B cell (primary cell): ENCODE measurements at regions of chr17 and their contacts with region 1.

Region 1: GRCh38 chr17:21214015-21214776 is at the start of gene TMEM11:
- DNase-seq: peak; percentile 96
- ATAC-seq: peak; percentile 91
- H3K4me3 ChIP-seq: peak within 1 kb of the TSS; percentile 68 to 99 (median 89)
- H3K4me3 Mint-ChIP-seq: peak within 1 kb of the TSS; percentile 93
- H3K27ac ChIP-seq: peak within 1 kb of the TSS; percentile 85 to 91
- H3K27ac Mint-ChIP-seq: peak within 1 kb of the TSS; percentile 92
- H3K4me1 ChIP-seq: peaks cover 31 to 37% of the 10 kb centered on the region in 2 donors
- H3K4me1 Mint-ChIP-seq: peaks cover 49% of the 10 kb centered on the region
- H3K27me3 ChIP-seq: no peaks in the 10 kb centered on the region
- H3K27me3 Mint-ChIP-seq: no peaks in the 10 kb centered on the region
- CTCF ChIP-seq: no peak
- total RNA-seq, gene TMEM11: 24.7 and 25.3 TPM in 2 replicates

Region 2: GRCh38 chr17:20155258-20156195 is 1058.7 kb before region 1 on chr17:
- CTCF ChIA-PET with region 1: no interaction called
- POLR2A ChIA-PET with region 1: no interaction called
- intact Hi-C with region 1: loop called (anchors 2 kb)
- DNase-seq: peak; percentile 99
- ATAC-seq: peak; percentile 96
- H3K4me3 ChIP-seq: peak overlapping the region; percentile 8 to 77 (median 72)
- H3K4me3 Mint-ChIP-seq: no peak overlapping the region
- H3K27ac ChIP-seq: peak overlapping the region; percentile 56 to 85
- H3K27ac Mint-ChIP-seq: no peak overlapping the region
- H3K4me1 ChIP-seq: peaks cover 27 to 35% of the 10 kb centered on the region in 2 donors
- H3K4me1 Mint-ChIP-seq: peaks cover 4% of the 10 kb centered on the region
- H3K27me3 ChIP-seq: no peaks in the 10 kb centered on the region
- H3K27me3 Mint-ChIP-seq: no peaks in the 10 kb centered on the region
- CTCF ChIP-seq: no peak

Region 3: DNA sequence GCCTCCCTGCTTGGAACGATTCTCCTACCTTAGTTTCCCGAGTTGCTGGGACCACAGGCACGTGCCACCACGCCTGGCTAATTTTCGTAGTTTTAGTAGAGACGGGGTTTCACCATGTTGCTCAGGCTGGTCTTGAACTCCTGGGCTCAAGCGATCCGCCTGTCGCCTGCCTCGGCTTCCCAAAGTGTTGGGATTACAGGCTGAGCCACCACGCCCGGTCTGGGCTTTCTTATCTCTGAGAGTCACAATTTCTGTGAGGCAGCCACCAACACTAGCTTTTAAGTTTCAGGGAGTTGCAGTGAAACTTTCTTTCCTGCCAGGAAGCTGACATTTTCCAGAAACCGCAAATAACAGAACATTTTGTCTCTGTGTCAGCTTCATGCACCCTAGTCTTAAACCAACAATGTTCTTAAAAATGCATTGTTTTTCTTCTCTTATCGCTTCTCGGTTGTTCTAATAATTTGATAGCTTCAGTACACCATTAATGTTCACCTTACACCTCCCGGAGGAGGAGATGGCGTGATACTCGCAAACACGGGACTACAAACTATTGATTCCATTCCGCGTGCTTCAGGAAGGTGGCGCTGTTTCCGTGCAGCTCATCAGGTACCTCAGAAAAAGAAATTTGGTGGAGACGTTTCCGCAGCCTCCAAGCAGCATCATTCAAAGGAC is 94.8 kb before region 1 on chr17:
- CTCF ChIA-PET with region 1: interaction called, 6 read pairs
- POLR2A ChIA-PET with region 1: no interaction called
- intact Hi-C with region 1: loop called (anchors 2 kb)
- DNase-seq: peak; percentile 81
- ATAC-seq: peak; percentile 92
- H3K4me3 ChIP-seq: no peak overlapping the region
- H3K4me3 Mint-ChIP-seq: no peak overlapping the region
- H3K27ac ChIP-seq: no peak overlapping the region
- H3K27ac Mint-ChIP-seq: peak overlapping the region; percentile 10
- H3K4me1 ChIP-seq: peaks cover 4% of the 10 kb centered on the region in 2 donors
- H3K4me1 Mint-ChIP-seq: peaks cover 4% of the 10 kb centered on the region
- H3K27me3 ChIP-seq: peaks cover 0 to 7% (median 1%) of the 10 kb centered on the region in 4 experiments
- H3K27me3 Mint-ChIP-seq: peaks cover 6% of the 10 kb centered on the region
- CTCF ChIP-seq: peak; percentile 83

Region 4: DNA sequence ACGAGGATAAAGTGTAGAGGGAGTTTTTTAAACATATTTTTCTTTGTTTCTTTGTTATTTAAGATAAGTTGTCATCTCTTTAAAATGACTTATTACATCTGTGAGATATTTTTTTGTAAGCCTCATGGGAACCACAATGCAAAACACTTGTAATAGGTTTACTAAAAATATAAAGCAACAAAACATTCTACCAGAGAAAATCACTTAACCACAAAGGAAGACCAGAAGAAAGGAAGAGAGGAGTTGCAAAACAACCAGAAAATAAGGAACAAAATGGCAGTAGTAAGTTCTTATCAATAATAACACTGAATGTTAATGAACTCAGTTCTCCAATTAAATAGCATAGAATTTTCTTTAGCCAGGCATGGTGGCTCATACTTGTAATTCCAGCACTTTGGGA is 64.6 kb before region 1 on chr17:
- CTCF ChIA-PET with region 1: no interaction called
- POLR2A ChIA-PET with region 1: no interaction called
- intact Hi-C with region 1: no loop called
- DNase-seq: no peak
- ATAC-seq: no peak
- H3K4me3 ChIP-seq: no peak overlapping the region
- H3K4me3 Mint-ChIP-seq: no peak overlapping the region
- H3K27ac ChIP-seq: no peak overlapping the region
- H3K27ac Mint-ChIP-seq: no peak overlapping the region
- H3K4me1 ChIP-seq: no peaks in the 10 kb centered on the region
- H3K4me1 Mint-ChIP-seq: peaks cover 4% of the 10 kb centered on the region
- H3K27me3 ChIP-seq: no peaks in the 10 kb centered on the region
- H3K27me3 Mint-ChIP-seq: no peaks in the 10 kb centered on the region
- CTCF ChIP-seq: no peak

Region 5: GRCh38 chr17:21252796-21253645 is 38.8 kb after region 1 on chr17 and contains the start of gene NATD1:
- CTCF ChIA-PET with region 1: interaction called, 3 read pairs
- POLR2A ChIA-PET with region 1: interaction called, 4 read pairs
- intact Hi-C with region 1: loop called (anchors 1 kb)
- DNase-seq: peak; percentile 90
- ATAC-seq: peak; percentile 79
- H3K4me3 ChIP-seq: peak within 1 kb of the TSS; percentile 35 to 90 (median 61)
- H3K4me3 Mint-ChIP-seq: peak within 1 kb of the TSS; percentile 89
- H3K27ac ChIP-seq: peak within 1 kb of the TSS; percentile 5 to 70
- H3K27ac Mint-ChIP-seq: peak within 1 kb of the TSS; percentile 88
- H3K4me1 ChIP-seq: peaks cover 11 to 24% of the 10 kb centered on the region in 2 donors
- H3K4me1 Mint-ChIP-seq: peaks cover 22% of the 10 kb centered on the region
- H3K27me3 ChIP-seq: no peaks in the 10 kb centered on the region
- H3K27me3 Mint-ChIP-seq: peaks cover 5% of the 10 kb centered on the region
- CTCF ChIP-seq: no peak
- total RNA-seq, gene NATD1: 6.2 and 6.7 TPM in 2 replicates

Region 6: GRCh38 chr17:21275579-21276263 is 61.5 kb after region 1 on chr17:
- CTCF ChIA-PET with region 1: interaction called, 4 read pairs
- POLR2A ChIA-PET with region 1: interaction called, 3 read pairs
- intact Hi-C with region 1: loop called (anchors 1 kb)
- DNase-seq: peak; percentile 93
- ATAC-seq: peak; percentile 86
- H3K4me3 ChIP-seq: peak overlapping the region; percentile 34 to 84 (median 71)
- H3K4me3 Mint-ChIP-seq: peak overlapping the region; percentile 98
- H3K27ac ChIP-seq: peak overlapping the region; percentile 86
- H3K27ac Mint-ChIP-seq: peak overlapping the region; percentile 86
- H3K4me1 ChIP-seq: peaks cover 35 to 41% of the 10 kb centered on the region in 2 donors
- H3K4me1 Mint-ChIP-seq: peaks cover 34% of the 10 kb centered on the region
- H3K27me3 ChIP-seq: no peaks in the 10 kb centered on the region
- H3K27me3 Mint-ChIP-seq: no peaks in the 10 kb centered on the region
- CTCF ChIP-seq: peak; percentile 34

Region 7: DNA sequence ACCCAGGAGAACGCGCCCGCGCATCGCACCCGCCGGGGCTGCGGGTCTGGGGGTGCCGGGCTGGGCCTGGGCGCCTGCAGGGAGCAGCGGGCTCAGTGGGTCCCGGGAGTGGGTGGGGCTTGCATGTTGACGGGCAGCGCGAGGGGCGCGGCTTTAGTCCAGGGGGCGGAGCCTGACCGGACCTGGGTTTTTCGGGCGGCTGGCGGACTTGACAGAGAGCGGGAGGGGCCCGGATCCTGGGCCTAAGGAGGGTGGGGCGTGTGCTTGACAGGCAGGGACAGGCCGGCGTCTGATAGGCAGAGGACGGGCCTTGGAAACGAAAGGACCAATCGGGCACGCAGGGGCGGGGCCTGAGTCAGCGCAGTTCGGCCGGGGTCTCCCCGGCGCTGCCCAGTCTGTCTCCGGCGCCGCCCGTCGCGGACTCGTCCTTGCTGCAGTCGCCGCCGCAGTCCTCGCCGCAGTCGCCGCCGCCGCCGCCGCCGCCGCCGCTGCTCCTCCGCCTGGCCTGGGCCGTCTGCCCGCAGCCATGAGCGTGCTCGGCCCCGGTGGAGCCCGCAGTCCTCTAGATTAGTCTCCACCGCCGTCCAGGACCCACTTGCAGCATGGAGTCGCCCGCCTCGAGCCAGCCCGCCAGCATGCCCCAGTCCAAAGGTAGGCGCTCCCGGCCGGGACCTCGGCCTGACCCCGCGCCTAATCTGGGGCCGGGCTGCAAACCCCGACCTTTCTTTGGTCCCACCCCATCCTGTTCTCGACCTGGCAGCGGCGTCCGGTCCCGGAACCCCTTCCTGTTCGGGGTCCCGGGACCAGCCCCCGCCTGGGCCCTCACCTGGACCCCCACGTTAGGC is 70.3 kb after region 1 on chr17 and contains the start of gene MAP2K3:
- CTCF ChIA-PET with region 1: interaction called, 4 read pairs
- POLR2A ChIA-PET with region 1: interaction called, 3 read pairs
- intact Hi-C with region 1: loop called (anchors 1 kb)
- DNase-seq: peak; percentile 98
- ATAC-seq: peak; percentile 66
- H3K4me3 ChIP-seq: peak within 1 kb of the TSS; percentile 81 to 98 (median 93)
- H3K4me3 Mint-ChIP-seq: peak within 1 kb of the TSS; percentile 96
- H3K27ac ChIP-seq: peak within 1 kb of the TSS; percentile 95
- H3K27ac Mint-ChIP-seq: peak within 1 kb of the TSS; percentile 99
- H3K4me1 ChIP-seq: peaks cover 58 to 78% of the 10 kb centered on the region in 2 donors
- H3K4me1 Mint-ChIP-seq: peaks cover 78% of the 10 kb centered on the region
- H3K27me3 ChIP-seq: no peaks in the 10 kb centered on the region
- H3K27me3 Mint-ChIP-seq: no peaks in the 10 kb centered on the region
- CTCF ChIP-seq: no peak
- total RNA-seq, gene MAP2K3: 114 and 118 TPM in 2 replicates

Region 8: DNA sequence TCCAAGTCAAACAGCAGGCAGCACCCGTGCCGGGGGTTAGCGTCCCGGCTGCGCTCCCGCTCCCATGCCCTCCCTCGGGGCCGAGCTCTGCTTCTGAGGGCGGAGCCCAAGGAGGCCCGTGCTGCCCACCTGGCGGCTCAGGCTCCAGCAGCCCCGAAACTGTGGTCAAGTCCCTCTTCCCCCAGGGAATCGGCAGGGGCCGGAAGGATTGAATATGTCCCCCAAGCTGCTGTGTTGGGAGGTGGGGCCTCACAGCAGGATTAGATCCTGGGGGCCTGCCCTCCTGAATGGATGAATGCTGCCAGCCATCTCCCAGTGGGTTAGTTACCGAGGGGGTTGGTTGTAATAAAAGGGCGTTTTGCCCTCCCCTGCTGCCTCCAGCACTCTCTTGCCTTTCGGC is 104.2 kb after region 1 on chr17:
- CTCF ChIA-PET with region 1: no interaction called
- POLR2A ChIA-PET with region 1: no interaction called
- intact Hi-C with region 1: loop called (anchors 1 kb)
- DNase-seq: no peak
- ATAC-seq: no peak
- H3K4me3 ChIP-seq: no peak overlapping the region
- H3K4me3 Mint-ChIP-seq: no peak overlapping the region
- H3K27ac ChIP-seq: no peak overlapping the region
- H3K27ac Mint-ChIP-seq: no peak overlapping the region
- H3K4me1 ChIP-seq: peaks cover 0 to 9% of the 10 kb centered on the region in 2 donors
- H3K4me1 Mint-ChIP-seq: peaks cover 7% of the 10 kb centered on the region
- H3K27me3 ChIP-seq: peaks cover 0 to under 1% (median 0%) of the 10 kb centered on the region in 4 experiments
- H3K27me3 Mint-ChIP-seq: peaks cover 3% of the 10 kb centered on the region
- CTCF ChIP-seq: no peak